Calu3 (cell line): ENCODE measurements at regions of chr15 and their contacts with region 1.

Region 1: GRCh38 chr15:35603301-35603700 is 57.3 kb upstream of the DPH6 start:
- DNase-seq: no peak
- H3K4me3 Mint-ChIP-seq: no peak overlapping the region
- H3K27ac Mint-ChIP-seq: no peak overlapping the region
- H3K4me1 Mint-ChIP-seq: no peaks in the 10 kb centered on the region
- H3K27me3 Mint-ChIP-seq: no peaks in the 10 kb centered on the region
- CTCF ChIP-seq: no peak

Region 2: GRCh38 chr15:35506260-35506870 is 96.9 kb before region 1 on chr15:
- CTCF ChIA-PET with region 1: no interaction called
- intact Hi-C with region 1: no loop called
- DNase-seq: no peak
- H3K4me3 Mint-ChIP-seq: no peak overlapping the region
- H3K27ac Mint-ChIP-seq: no peak overlapping the region
- H3K4me1 Mint-ChIP-seq: no peaks in the 10 kb centered on the region
- H3K27me3 Mint-ChIP-seq: no peaks in the 10 kb centered on the region
- CTCF ChIP-seq: no peak

Region 3: GRCh38 chr15:35583863-35584528 is 19.3 kb before region 1 on chr15:
- CTCF ChIA-PET with region 1: no interaction called
- intact Hi-C with region 1: loop called (anchors 1 kb)
- DNase-seq: no peak
- H3K4me3 Mint-ChIP-seq: no peak overlapping the region
- H3K27ac Mint-ChIP-seq: no peak overlapping the region
- H3K4me1 Mint-ChIP-seq: no peaks in the 10 kb centered on the region
- H3K27me3 Mint-ChIP-seq: no peaks in the 10 kb centered on the region
- CTCF ChIP-seq: no peak

Region 4: DNA sequence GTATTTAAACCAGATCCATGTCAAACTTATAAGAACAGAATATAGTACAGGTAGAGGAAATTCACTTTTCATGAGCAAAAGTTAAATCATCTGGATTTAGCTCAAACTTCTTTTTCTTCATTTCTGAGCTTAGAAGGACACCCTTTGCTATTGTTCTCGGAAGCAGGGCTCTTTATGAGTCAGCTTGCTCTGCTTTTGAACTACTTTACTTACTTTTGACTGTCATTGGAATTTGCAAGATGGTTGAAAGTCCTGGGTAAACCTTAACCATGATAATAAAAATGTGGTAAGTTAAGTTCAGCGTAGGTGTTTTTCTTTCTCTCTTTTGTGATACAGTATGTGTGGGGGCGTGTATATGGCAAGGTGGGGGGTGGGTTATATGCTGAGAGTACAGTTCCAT is 255.4 kb after region 1 on chr15:
- CTCF ChIA-PET with region 1: interaction called, 10 read pairs
- intact Hi-C with region 1: no loop called
- DNase-seq: no peak
- H3K4me3 Mint-ChIP-seq: no peak overlapping the region
- H3K27ac Mint-ChIP-seq: no peak overlapping the region
- H3K4me1 Mint-ChIP-seq: no peaks in the 10 kb centered on the region
- H3K27me3 Mint-ChIP-seq: no peaks in the 10 kb centered on the region
- CTCF ChIP-seq: no peak